ENCODE measurements at regions of chr7 and their contacts with region 1.

Region 1: DNA sequence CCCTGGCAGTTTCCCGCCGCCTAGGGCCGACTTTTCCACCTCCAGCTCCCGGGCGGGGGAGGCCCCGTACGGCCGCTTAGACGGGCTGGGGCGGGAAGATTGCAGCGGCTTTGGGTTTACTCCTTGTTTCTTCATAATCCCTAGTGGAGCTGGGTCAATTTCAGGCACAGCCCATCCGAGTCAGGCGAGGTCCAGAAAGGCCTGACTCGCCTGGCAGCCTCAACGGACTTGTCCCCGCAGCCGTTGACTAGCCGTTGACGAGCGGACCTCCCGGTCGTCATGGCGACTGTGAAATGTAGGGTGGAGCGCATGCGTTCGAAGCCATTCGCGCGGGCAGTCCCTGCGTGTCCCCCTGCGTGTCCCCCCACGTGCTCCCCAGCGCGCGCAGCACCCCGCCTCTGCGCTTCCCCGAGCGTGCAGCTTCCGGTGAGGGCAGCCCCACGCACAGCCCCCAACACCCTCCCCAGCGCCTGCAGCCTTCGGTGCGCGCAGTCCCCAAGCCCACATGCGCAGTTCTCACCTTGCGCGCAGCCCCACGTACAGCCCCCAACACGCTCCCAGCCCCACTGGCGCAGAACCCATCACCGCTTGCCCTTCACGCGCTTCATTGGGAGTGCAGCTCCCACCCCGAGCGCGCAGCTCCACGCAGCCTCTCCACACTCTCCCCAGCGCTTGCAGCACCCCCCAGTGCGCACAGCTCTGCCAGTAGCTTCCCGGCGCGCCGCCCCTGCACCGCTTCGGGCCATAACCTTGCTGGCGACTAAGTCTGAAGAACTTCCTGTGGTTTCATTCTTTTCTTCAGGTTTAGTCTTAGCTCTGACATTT is 67.8 kb downstream of the TBX20 start:
- DNase-seq: peak; percentile 79 to 92 (median 90)
- ATAC-seq: peak; percentile 92 to 94
- H3K4me3 ChIP-seq: peak overlapping the region; percentile 31
- H3K27ac ChIP-seq: peak overlapping the region; percentile 51
- H3K4me1 ChIP-seq: no peaks in the 10 kb centered on the region
- H3K27me3 ChIP-seq: no peaks in the 10 kb centered on the region

Region 2: GRCh38 chr7:34718867-34719266 is 467.3 kb before region 1 on chr7:
- intact Hi-C with region 1: no loop called
- DNase-seq: no peak
- ATAC-seq: peak in 1 of 2 donors; percentile 67
- H3K4me3 ChIP-seq: no peak overlapping the region
- H3K27ac ChIP-seq: no peak overlapping the region
- H3K4me1 ChIP-seq: no peaks in the 10 kb centered on the region
- H3K27me3 ChIP-seq: no peaks in the 10 kb centered on the region

Region 3: GRCh38 chr7:35467456-35467978 is 281.4 kb after region 1 on chr7:
- intact Hi-C with region 1: no loop called
- DNase-seq: no peak
- ATAC-seq: no peak
- H3K4me3 ChIP-seq: no peak overlapping the region
- H3K27ac ChIP-seq: no peak overlapping the region
- H3K4me1 ChIP-seq: no peaks in the 10 kb centered on the region
- H3K27me3 ChIP-seq: no peaks in the 10 kb centered on the region

Region 4: DNA sequence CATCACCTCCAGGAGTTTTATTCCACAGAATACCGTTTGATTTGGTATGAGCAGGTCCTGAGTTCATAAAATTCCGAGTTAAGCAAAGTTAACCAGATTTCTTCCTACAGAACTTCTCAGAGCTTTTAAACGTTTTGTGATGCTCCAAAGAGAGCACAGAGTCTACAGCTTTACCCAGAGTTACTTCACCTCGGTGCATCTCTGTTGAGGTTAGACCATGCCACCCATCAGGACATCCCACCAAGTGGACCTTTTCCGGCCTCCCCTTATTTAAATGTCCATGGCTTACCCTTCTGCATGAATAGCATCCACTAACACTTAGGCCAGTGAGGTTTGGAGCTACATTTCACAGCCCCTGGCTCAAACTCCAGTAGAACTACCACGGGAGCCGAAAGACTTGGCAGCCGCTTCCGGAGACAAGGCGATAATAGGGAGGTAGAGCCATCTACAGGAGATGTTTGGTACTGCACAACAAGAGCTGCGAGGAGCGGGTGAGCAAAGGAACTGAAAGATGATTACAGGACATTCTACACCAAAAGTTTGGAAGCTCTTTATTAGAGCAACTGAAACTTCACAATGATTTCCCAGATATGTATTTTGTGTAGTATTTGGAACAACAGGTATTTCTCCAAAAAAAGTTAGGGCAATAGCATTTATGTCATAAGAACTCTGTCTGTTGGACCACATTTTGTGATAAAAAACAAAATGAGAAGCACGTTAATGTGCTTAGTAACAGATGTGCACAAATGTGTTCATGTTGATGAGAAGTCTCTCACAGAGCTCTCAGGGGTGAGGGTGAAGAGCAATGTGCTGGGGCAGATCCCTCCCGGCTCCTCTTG is 334.1 kb after region 1 on chr7:
- intact Hi-C with region 1: loop called in 1 of 4 experiments (anchors 5 kb)
- DNase-seq: peak; percentile 88 to 96 (median 90)
- ATAC-seq: peak; percentile 92
- H3K4me3 ChIP-seq: no peak overlapping the region
- H3K27ac ChIP-seq: peak overlapping the region; percentile 24
- H3K4me1 ChIP-seq: peaks cover 2% of the 10 kb centered on the region
- H3K27me3 ChIP-seq: no peaks in the 10 kb centered on the region

Region 5: GRCh38 chr7:35537067-35538023 is 351.2 kb after region 1 on chr7:
- intact Hi-C with region 1: loop called in 1 of 4 experiments (anchors 10 kb)
- DNase-seq: peak; percentile 84 to 94 (median 94)
- ATAC-seq: peak; percentile 96
- H3K4me3 ChIP-seq: peak overlapping the region; percentile 66
- H3K27ac ChIP-seq: no peak overlapping the region
- H3K4me1 ChIP-seq: no peaks in the 10 kb centered on the region
- H3K27me3 ChIP-seq: no peaks in the 10 kb centered on the region